ENCODE measurements at regions of chr2 and their contacts with region 1.

Region 1: DNA sequence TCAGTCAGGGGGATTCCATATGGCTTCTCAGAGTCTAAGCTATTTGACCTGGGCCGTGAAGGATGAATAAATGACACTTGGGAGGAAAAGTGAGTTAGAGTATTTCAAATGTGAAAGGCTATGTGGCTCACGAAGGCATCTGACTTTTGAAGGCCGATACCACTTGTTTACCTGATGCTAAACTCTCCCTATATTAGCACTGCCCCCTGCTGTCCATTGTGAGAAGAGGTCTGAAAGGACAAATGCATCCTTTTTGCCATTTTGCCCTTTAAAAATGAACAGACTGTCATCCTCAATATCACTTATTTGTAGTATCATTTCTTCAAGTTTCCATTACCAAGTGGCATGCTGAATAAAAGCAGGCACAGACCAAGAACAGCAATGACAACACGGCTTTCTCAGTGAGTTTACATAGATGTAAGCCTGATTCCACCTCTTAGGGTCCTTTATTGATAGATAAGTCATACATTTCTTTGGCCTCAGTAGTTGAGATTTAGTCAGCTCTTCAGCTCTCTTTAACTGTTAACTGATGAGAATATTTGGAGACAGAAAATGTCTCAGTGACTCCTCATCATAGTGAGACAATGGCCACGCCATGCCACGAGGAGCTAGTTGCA is 40.1 kb downstream of the DOCK10 start:
- DNase-seq: no peak
- ATAC-seq: peak; percentile 68
- H3K4me3 Mint-ChIP-seq: peak overlapping the region; percentile 53
- H3K27ac Mint-ChIP-seq: peak overlapping the region; percentile 79
- H3K4me1 Mint-ChIP-seq: peaks cover 34% of the 10 kb centered on the region
- H3K27me3 Mint-ChIP-seq: no peaks in the 10 kb centered on the region
- CTCF ChIP-seq: no peak

Region 2: GRCh38 chr2:224532931-224533330 is 469.2 kb before region 1 on chr2:
- CTCF ChIA-PET with region 1: no interaction called
- POLR2A ChIA-PET with region 1: no interaction called
- intact Hi-C with region 1: no loop called
- DNase-seq: no peak
- ATAC-seq: no peak
- H3K4me3 Mint-ChIP-seq: no peak overlapping the region
- H3K27ac Mint-ChIP-seq: peak overlapping the region; percentile 60
- H3K4me1 Mint-ChIP-seq: peaks cover 52% of the 10 kb centered on the region
- H3K27me3 Mint-ChIP-seq: no peaks in the 10 kb centered on the region
- CTCF ChIP-seq: no peak

Region 3: GRCh38 chr2:224849264-224849663 is 152.9 kb before region 1 on chr2:
- CTCF ChIA-PET with region 1: interaction called, 3 read pairs
- POLR2A ChIA-PET with region 1: no interaction called
- intact Hi-C with region 1: loop called (anchors 1 kb)
- DNase-seq: no peak
- ATAC-seq: no peak
- H3K4me3 Mint-ChIP-seq: no peak overlapping the region
- H3K27ac Mint-ChIP-seq: no peak overlapping the region
- H3K4me1 Mint-ChIP-seq: no peaks in the 10 kb centered on the region
- H3K27me3 Mint-ChIP-seq: no peaks in the 10 kb centered on the region
- CTCF ChIP-seq: no peak

Region 4: GRCh38 chr2:224927646-224928173 is 74.4 kb before region 1 on chr2:
- CTCF ChIA-PET with region 1: interaction called, 77 read pairs
- POLR2A ChIA-PET with region 1: no interaction called
- intact Hi-C with region 1: loop called (anchors 1 kb)
- DNase-seq: no peak
- ATAC-seq: no peak
- H3K4me3 Mint-ChIP-seq: peak overlapping the region; percentile 11
- H3K27ac Mint-ChIP-seq: peak overlapping the region; percentile 78
- H3K4me1 Mint-ChIP-seq: peaks cover 98% of the 10 kb centered on the region
- H3K27me3 Mint-ChIP-seq: no peaks in the 10 kb centered on the region
- CTCF ChIP-seq: no peak

Region 5: DNA sequence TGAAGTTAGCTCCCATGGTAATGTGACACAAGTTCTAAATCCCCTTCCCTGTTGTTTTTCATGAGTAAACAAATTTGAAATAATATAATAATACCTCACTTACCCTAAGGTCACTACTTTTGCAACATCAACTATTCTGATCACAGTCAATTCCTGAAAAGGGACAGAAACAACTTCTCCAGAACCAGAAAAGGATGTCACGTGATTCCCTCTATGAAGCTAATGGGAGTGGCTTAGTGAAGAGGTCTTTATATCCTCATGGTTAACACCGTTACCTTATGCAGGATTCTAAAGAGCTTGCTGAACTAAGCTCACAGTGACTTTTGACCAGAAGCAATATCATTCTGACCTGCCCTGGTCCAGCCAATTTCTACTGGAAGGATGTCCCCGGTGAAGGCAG is 11.4 kb before region 1 on chr2:
- CTCF ChIA-PET with region 1: interaction called, 12 read pairs
- POLR2A ChIA-PET with region 1: interaction called, 3 read pairs
- intact Hi-C with region 1: loop called (anchors 2 kb)
- DNase-seq: no peak
- ATAC-seq: no peak
- H3K4me3 Mint-ChIP-seq: no peak overlapping the region
- H3K27ac Mint-ChIP-seq: no peak overlapping the region
- H3K4me1 Mint-ChIP-seq: peaks cover 32% of the 10 kb centered on the region
- H3K27me3 Mint-ChIP-seq: no peaks in the 10 kb centered on the region
- CTCF ChIP-seq: no peak

Region 6: DNA sequence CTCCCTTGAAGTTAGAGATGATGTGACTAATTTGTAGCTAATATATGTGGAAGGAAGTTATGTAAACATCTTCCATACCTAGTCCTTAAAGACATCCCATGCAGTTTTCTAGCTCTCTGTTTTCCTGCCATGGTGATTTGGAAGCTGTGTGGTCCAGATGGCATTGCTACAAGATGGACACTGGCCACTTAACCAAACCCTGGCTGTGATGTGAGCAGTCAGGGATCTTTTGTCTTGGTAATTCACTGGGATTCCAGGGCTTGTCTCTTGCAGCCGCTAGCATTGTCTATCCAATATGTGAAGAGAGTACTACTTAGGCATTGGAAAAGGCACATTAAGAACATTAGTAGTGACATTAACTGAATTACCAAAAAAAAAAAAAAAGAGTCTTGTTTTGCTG is 180.0 kb after region 1 on chr2:
- CTCF ChIA-PET with region 1: no interaction called
- POLR2A ChIA-PET with region 1: no interaction called
- intact Hi-C with region 1: no loop called
- DNase-seq: no peak
- ATAC-seq: no peak
- H3K4me3 Mint-ChIP-seq: no peak overlapping the region
- H3K27ac Mint-ChIP-seq: no peak overlapping the region
- H3K4me1 Mint-ChIP-seq: no peaks in the 10 kb centered on the region
- H3K27me3 Mint-ChIP-seq: peaks cover 6% of the 10 kb centered on the region
- CTCF ChIP-seq: no peak

Region 7: GRCh38 chr2:225566798-225567197 is 564.7 kb after region 1 on chr2:
- CTCF ChIA-PET with region 1: no interaction called
- POLR2A ChIA-PET with region 1: no interaction called
- intact Hi-C with region 1: loop called (anchors 10 kb)
- DNase-seq: no peak
- ATAC-seq: no peak
- H3K4me3 Mint-ChIP-seq: no peak overlapping the region
- H3K27ac Mint-ChIP-seq: no peak overlapping the region
- H3K4me1 Mint-ChIP-seq: peaks cover 4% of the 10 kb centered on the region
- H3K27me3 Mint-ChIP-seq: peaks cover 3% of the 10 kb centered on the region
- CTCF ChIP-seq: no peak

Measured in activated B cell treated with CpG ODN at 0.5 μM for 24 hours (primary cell).